Gastrocnemius medialis (tissue), 4 donors: ENCODE measurements at regions of chr20 and their contacts with region 1.

Region 1: DNA sequence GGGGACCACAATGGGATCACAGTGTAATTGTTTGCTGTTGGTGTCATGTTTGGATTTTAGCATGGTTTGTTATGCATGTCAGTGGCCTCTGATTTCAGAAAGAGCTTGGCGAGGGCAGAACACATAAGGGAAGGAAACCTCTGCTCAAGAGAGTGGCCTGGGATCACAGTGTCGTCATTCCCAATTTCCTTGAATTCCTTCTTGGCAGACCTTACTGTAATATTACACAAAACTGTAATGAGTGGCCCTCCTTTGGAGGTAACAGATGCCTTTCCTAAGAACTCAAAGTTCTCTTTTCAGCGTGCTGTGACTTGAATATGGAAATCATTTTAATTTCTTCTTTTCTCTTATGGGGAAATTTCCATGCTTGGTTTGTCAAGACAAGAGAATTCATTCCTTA is 46.9 kb downstream of the JAG1 start:
- DNase-seq: no peak
- ATAC-seq: peak; percentile 71 to 73
- H3K4me3 ChIP-seq: no peak overlapping the region
- H3K27ac ChIP-seq: peak overlapping the region in 2 of 4 donors; percentile 36 to 53
- H3K4me1 ChIP-seq: peaks cover 2 to 3% of the 10 kb centered on the region in 2 donors
- H3K27me3 ChIP-seq: no peaks in the 10 kb centered on the region
- CTCF ChIP-seq: no peak
- POLR2A ChIP-seq: no peak

Region 2: DNA sequence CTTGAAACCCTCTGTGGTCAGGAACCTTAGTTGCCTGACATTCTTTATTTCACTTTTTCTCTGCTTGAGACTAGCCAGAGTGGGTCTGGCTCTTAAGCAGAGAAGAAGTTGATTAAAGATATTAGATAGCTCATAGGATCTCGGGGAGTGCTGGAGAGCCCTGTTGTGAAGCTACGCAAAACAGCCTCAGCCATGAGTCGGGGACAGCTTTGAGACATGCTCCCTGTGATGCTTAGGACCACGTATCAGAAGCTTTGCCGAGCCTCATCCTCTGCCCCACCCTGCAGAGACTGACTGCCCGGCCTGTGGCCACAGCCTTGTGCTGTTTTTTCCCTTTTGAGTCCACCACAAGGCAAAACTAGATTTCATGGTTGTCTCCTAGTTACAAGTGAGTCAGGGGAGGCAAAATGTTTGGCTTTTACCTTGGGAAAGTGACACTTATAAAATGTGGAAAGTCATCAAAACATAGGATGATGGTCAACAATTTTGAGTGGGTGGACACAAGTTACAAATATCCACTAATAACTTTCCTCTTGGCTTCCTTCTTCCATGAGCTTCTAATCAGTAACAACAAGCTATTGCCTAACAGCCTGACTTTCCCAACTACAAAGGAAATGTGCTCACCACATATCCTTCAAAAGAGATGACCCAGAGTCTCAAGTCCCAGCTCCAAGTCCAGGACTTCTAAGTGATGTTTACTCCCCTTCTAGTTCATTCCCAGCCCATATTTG is 61.5 kb before region 1 on chr20:
- in situ Hi-C with region 1: no loop called
- intact Hi-C with region 1: no loop called
- DNase-seq: peak in 1 of 2 donors; percentile 47
- ATAC-seq: peak; percentile 72 to 77
- H3K4me3 ChIP-seq: no peak overlapping the region
- H3K27ac ChIP-seq: peak overlapping the region; percentile 31 to 65 (median 48)
- H3K4me1 ChIP-seq: no peaks in the 10 kb centered on the region
- H3K27me3 ChIP-seq: no peaks in the 10 kb centered on the region
- CTCF ChIP-seq: no peak
- POLR2A ChIP-seq: no peak

Region 3: GRCh38 chr20:10591956-10592521 is 34.9 kb before region 1 on chr20:
- in situ Hi-C with region 1: no loop called
- intact Hi-C with region 1: loop called (anchors 5 kb)
- DNase-seq: no peak
- ATAC-seq: peak; percentile 33 to 72
- H3K4me3 ChIP-seq: no peak overlapping the region
- H3K27ac ChIP-seq: peak overlapping the region; percentile 45 to 66 (median 50)
- H3K4me1 ChIP-seq: no peaks in the 10 kb centered on the region
- H3K27me3 ChIP-seq: no peaks in the 10 kb centered on the region
- CTCF ChIP-seq: no peak
- POLR2A ChIP-seq: no peak

Region 4: DNA sequence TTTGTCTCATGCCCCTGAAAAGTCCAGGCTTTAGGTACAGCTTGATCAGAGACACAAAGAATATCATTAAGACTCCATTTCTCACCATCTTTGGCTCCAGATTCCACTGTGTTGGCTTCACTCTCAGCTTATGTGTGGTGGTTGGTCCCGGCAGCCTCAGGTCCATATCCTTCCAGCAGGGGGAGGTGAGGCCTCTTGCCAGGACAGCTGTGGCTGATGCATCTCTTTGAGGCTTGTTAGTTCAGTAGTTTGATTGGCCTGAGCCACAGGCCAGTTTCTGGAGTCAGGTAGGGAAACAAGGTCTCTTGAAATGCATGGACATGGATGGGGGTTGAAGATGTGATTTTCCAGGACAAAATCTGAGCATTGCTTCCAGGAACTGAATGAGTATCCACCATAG is 15.5 kb before region 1 on chr20:
- in situ Hi-C with region 1: no loop called
- intact Hi-C with region 1: no loop called
- DNase-seq: peak in 1 of 2 donors; percentile 35
- ATAC-seq: no peak
- H3K4me3 ChIP-seq: no peak overlapping the region
- H3K27ac ChIP-seq: no peak overlapping the region
- H3K4me1 ChIP-seq: no peaks in the 10 kb centered on the region
- H3K27me3 ChIP-seq: no peaks in the 10 kb centered on the region
- CTCF ChIP-seq: peak in 3 of 5 experiments; percentile 26 to 51 (median 30)
- POLR2A ChIP-seq: no peak

Region 5: DNA sequence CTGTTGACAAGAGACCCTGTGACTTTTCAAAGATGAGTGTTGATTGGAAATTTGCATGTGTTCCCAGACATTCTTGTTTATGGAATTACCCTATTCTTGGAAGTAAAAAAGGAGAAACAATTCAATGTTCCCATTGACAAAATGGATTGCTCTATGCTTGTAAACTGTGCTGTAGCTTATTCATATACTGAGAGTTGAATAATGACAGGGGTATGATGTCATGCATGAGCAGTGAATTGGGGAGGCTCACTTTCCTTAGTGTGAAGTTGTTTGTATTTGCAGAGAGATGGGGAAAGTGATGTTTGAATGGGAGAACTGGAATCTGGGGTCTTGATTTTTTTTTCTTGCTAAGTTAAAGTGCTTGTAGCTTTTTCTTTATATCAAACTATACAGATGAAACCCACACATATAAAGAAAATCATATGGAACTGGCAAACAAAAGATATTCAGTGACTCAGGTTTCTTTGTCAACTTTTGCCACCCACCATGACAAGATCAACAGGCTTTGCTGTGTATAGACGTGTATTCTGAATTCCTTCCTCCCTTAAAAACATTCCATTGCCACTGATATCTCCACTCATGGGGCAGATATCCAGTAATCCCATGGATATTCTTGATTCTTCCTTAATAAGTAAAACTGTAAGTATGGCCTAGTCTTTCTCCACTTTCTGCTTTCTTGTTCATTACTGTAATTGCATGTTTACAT is 144.7 kb after region 1 on chr20:
- in situ Hi-C with region 1: no loop called
- intact Hi-C with region 1: no loop called
- DNase-seq: no peak
- ATAC-seq: no peak
- H3K4me3 ChIP-seq: no peak overlapping the region
- H3K27ac ChIP-seq: no peak overlapping the region
- H3K4me1 ChIP-seq: no peaks in the 10 kb centered on the region
- H3K27me3 ChIP-seq: no peaks in the 10 kb centered on the region
- CTCF ChIP-seq: no peak
- POLR2A ChIP-seq: no peak

Region 6: DNA sequence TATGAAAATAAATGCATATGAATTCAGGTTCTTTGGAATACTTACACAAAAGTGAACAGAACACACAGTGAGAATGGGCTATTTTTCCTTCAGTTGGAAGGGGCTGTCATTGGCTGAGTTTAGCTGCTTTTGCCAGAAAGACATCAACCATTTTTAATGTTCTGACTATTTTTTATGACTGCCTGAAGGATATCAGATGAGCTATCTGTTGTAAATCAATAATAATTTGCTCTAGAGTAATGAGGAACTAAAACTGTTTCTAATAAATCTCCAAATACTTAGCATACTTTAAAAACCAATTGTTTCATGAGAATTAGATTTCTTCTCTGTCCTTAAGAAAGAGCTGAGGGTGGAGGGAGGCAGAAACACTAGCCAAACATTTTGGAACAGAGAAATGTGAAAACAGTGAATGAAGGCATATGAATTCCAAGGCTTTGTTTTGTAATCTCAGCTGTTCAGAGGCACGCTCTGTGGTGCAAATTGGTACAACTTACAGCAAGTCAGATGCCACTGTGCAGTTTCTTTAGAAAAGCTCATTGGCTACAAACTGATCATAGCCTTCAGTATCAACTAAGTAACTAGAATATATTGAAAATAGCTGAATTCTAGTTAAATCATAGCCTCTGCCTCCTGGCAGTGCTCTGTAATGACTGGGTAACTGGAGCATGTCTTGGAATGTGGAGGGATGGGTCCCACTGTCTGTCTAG is 275.8 kb after region 1 on chr20:
- in situ Hi-C with region 1: no loop called
- intact Hi-C with region 1: no loop called
- DNase-seq: no peak
- ATAC-seq: peak; percentile 26 to 30
- H3K4me3 ChIP-seq: no peak overlapping the region
- H3K27ac ChIP-seq: peak overlapping the region in 1 of 4 donors; percentile 22
- H3K4me1 ChIP-seq: peaks cover 0 to 5% of the 10 kb centered on the region in 2 donors
- H3K27me3 ChIP-seq: no peaks in the 10 kb centered on the region
- CTCF ChIP-seq: no peak
- POLR2A ChIP-seq: no peak